Activated naive CD8-positive, alpha-beta T cell treated with anti-CD3 and anti-CD28 coated beads, Interleukin-2, amount 10 ng/mL, durations not matched to agents 7 days and 5 days (primary cell): ENCODE measurements at regions of chr5 and their contacts with region 1.

Region 1: GRCh38 chr5:43602461-43603343 is at the start of gene NNT:
- DNase-seq: peak; percentile 86
- ATAC-seq: peak; percentile 87
- H3K4me3 Mint-ChIP-seq: peak within 1 kb of the TSS; percentile 93
- H3K27ac Mint-ChIP-seq: peak within 1 kb of the TSS; percentile 90
- H3K4me1 Mint-ChIP-seq: peaks cover 28% of the 10 kb centered on the region
- H3K27me3 Mint-ChIP-seq: no peaks in the 10 kb centered on the region
- total RNA-seq, gene NNT: 97.5 to 108 TPM

Region 2: GRCh38 chr5:43389679-43390329 is 212.9 kb before region 1 on chr5:
- POLR2A ChIA-PET with region 1: no interaction called
- DNase-seq: no peak
- ATAC-seq: peak; percentile 81
- H3K4me3 Mint-ChIP-seq: no peak overlapping the region
- H3K27ac Mint-ChIP-seq: no peak overlapping the region
- H3K4me1 Mint-ChIP-seq: peaks cover 17% of the 10 kb centered on the region
- H3K27me3 Mint-ChIP-seq: no peaks in the 10 kb centered on the region

Region 3: GRCh38 chr5:43514816-43515677 is 87.7 kb before region 1 on chr5 and contains the start of gene C5orf34:
- POLR2A ChIA-PET with region 1: interaction called, 11 read pairs
- DNase-seq: peak; percentile 92
- ATAC-seq: peak; percentile 94
- H3K4me3 Mint-ChIP-seq: peak within 1 kb of the TSS; percentile 86
- H3K27ac Mint-ChIP-seq: peak within 1 kb of the TSS; percentile 93
- H3K4me1 Mint-ChIP-seq: peaks cover 27% of the 10 kb centered on the region
- H3K27me3 Mint-ChIP-seq: no peaks in the 10 kb centered on the region
- total RNA-seq, gene C5orf34: 9.3 to 9.8 TPM

Region 4: DNA sequence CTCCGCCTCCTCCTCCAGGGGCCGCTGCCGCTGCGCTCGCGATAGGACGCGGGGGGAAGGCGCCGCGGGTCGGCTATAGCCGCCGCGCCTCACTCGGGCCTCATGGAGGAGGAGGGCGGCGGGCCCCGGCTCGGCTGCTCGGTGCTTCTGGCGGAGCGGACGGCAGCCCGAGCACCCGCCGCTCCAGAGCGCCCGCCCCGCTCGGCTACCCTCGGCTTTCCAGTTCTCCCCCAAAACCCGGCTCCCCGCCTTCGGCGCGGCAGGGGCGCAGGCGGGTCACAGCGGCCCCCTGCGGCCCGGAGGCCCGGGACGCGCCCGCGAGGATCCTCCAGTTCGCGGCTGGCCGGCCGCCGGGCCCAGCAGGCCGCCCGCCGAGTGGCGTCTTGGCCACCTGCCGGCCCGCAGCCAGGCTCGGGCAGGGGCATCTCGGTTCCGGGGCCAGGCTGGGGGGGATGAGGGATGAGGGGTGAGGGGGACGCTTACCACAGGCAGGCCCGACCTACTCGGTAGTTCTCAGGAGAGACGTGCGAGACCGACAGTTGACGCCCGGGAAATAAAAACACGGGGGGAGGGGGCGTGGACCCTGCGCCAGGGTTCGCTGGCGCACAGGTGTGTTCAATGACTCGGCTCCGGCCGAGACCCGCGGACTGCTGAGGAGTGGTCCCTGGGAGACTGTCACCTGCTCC is 45.7 kb before region 1 on chr5 and contains the start of gene PAIP1:
- POLR2A ChIA-PET with region 1: interaction called, 23 read pairs
- DNase-seq: peak; percentile 89
- ATAC-seq: peak; percentile 86
- H3K4me3 Mint-ChIP-seq: peak within 1 kb of the TSS; percentile 86
- H3K27ac Mint-ChIP-seq: peak within 1 kb of the TSS; percentile 95
- H3K4me1 Mint-ChIP-seq: peaks cover 14% of the 10 kb centered on the region
- H3K27me3 Mint-ChIP-seq: peaks cover 12% of the 10 kb centered on the region
- total RNA-seq, gene PAIP1: 34.9 to 37.0 TPM